PC-3 (cell line): ENCODE measurements at regions of chr14 and their contacts with region 1.

Region 1: DNA sequence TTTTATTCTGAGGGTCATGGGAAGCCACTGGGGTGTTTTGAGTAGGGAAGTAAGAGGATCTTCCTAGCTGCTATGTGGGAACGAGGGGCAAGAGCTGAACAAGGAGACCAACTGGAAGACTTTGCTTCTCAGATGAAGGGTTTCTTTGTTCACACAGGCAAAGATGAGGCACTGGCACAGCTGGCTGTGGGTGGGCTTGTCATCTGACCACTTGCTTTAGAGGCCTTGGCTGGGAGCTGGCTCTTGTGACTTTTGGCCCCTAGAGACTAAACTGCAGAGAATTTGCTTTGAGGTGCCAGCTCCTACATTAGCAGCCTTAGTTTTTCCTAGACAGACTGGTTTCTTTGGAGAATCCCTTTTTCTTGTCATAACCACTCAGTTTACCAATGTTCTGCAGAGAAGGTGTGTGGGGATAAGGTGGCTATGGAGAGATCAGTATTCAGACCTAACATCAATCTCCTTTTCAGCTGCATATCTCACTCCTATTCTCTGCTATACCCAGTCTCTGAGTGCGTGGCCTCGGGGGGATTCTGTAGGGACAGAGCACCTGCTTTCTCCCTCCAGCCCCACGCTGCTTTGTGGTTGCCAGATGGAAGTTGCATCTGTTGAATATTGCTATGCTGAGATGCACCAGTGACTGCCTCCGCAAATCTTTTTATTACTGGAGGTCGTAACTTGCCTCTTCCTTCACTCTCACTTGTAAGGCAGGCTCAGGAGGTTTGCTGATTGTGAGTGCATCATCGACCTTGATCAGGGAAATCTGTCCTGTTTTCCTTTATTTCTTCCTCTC is 12.7 kb downstream of the PPP2R5C start:
- DNase-seq: no peak
- ATAC-seq: no peak
- H3K4me3 ChIP-seq: no peak overlapping the region
- H3K27ac ChIP-seq: no peak overlapping the region
- H3K4me1 ChIP-seq: peaks cover 18% of the 10 kb centered on the region
- H3K27me3 ChIP-seq: no peaks in the 10 kb centered on the region
- CTCF ChIP-seq: no peak

Region 2: DNA sequence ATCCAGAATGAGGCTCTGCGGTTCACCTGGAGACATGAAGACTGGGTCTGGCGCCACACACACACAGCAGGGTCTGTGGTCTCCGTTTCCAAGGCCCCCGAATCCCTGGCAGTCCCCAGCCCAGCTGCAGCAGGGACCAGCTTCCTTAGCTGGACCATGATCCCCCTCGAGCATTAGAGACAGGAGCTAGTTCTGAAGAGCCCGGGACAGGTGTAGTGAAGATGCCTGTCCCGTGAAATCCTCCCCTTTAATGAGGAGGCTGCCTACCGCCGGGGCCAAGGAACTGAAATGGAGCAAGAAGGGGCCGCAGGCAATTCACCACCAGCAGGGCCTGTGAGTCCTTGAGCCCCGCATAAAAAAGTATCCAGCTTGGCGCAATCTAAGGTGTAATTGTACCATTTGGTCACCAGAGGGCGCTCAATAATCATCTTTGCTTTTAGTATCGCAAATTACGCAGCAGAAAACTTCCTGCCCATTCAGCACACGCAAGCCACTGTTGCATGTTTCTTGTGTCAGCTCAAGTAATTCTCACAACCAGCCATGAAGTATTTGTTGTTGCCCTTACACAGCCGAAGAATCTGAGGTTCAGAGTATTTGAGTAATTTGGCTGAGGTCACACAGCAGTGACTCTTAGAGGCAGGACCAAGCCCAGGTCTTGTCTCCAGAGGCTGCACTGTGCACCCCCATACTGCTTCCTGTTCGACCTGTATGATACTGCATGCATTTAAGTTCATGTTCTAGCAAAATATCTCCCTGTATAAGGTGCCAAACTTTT is 66.9 kb before region 1 on chr14:
- CTCF ChIA-PET with region 1: interaction called, 13 read pairs
- POLR2A ChIA-PET with region 1: no interaction called
- intact Hi-C with region 1: loop called (anchors 1 kb)
- DNase-seq: peak; percentile 89
- ATAC-seq: peak; percentile 55
- H3K4me3 ChIP-seq: 0 out of 2 replicates have a peak overlapping the region, but pooled peaks have one; percentile 25
- H3K27ac ChIP-seq: peak overlapping the region; percentile 21
- H3K4me1 ChIP-seq: peaks cover 22% of the 10 kb centered on the region
- H3K27me3 ChIP-seq: no peaks in the 10 kb centered on the region
- CTCF ChIP-seq: peak; percentile 88

Region 3: DNA sequence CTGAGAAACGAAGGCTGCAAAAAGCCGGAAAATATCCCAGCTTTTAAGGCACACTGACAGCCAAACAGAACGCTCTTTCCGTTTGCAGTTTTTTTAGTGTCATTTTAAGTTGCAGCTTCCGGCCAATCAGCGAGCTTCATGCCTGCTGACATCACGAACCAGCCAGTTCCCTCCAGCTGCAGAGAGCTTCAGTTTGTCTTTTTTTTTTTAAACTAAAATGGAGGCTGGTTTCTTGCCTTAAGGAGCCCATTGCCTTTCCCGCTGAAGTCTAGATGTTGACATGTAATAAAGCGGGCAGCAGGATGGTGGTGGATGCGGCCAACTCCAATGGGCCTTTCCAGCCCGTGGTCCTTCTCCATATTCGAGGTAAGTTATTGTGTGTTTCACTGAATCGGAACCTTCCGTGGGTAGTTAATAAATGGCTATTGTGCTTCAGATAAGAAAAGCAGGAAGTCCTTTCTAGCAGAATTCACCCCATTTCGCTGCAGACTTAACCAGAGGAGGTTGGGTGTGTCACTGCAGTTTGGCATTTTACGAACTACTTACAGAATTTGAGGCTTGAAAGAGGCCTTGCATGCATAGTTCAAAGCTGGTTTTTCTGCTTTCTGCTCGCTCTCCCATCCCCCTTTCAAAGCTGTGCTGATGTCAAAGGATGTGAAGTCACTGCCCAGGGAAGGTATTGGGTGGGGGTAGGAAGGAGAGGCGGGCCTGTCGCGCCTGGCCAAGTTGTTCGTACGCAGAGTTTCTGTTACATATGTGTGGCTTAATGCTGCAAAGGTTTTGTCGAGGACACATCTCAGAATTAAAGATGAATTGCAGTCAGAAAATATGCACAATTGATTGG is 35.7 kb after region 1 on chr14:
- CTCF ChIA-PET with region 1: interaction called, 8 read pairs
- POLR2A ChIA-PET with region 1: interaction called, 5 read pairs
- intact Hi-C with region 1: loop called (anchors 5 kb)
- DNase-seq: peak; percentile 93
- ATAC-seq: peak; percentile 92
- H3K4me3 ChIP-seq: peak overlapping the region; percentile 72
- H3K27ac ChIP-seq: peak overlapping the region; percentile 98
- H3K4me1 ChIP-seq: peaks cover 50% of the 10 kb centered on the region
- H3K27me3 ChIP-seq: no peaks in the 10 kb centered on the region
- CTCF ChIP-seq: no peak

Region 4: DNA sequence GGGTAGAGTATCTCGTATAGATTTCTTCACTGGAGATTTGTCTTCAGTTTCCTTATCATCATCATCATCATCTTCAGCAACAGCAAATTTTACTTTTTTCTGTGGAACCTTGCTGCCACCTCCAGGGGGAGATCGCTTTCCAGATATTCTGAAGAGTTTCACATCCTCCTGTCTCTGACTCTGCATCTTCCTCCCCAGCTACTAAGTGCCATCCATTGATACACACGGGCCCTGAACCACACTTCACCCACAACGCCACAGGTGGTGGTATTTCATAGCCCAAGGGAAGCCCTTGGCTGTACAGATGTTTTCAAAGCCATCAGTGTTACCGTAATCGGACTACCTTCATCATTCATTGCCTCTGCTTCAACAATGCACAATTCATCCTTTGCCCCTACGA is 69.5 kb after region 1 on chr14:
- CTCF ChIA-PET with region 1: interaction called, 3 read pairs
- POLR2A ChIA-PET with region 1: no interaction called
- intact Hi-C with region 1: loop called (anchors 5 kb)
- DNase-seq: peak; percentile 21
- ATAC-seq: 0 out of 2 replicates have a peak, but pooled peaks have one; percentile 20
- H3K4me3 ChIP-seq: no peak overlapping the region
- H3K27ac ChIP-seq: no peak overlapping the region
- H3K4me1 ChIP-seq: no peaks in the 10 kb centered on the region
- H3K27me3 ChIP-seq: no peaks in the 10 kb centered on the region
- CTCF ChIP-seq: peak; percentile 63

Region 5: GRCh38 chr14:101889898-101890297 is 115.7 kb after region 1 on chr14:
- CTCF ChIA-PET with region 1: interaction called, 6 read pairs
- POLR2A ChIA-PET with region 1: no interaction called
- intact Hi-C with region 1: loop called (anchors 1 kb)
- DNase-seq: peak; percentile 27
- ATAC-seq: peak; percentile 51
- H3K4me3 ChIP-seq: no peak overlapping the region
- H3K27ac ChIP-seq: no peak overlapping the region
- H3K4me1 ChIP-seq: no peaks in the 10 kb centered on the region
- H3K27me3 ChIP-seq: no peaks in the 10 kb centered on the region
- CTCF ChIP-seq: peak; percentile 47

Region 6: GRCh38 chr14:101953151-101953550 is 178.9 kb after region 1 on chr14:
- CTCF ChIA-PET with region 1: interaction called, 4 read pairs
- POLR2A ChIA-PET with region 1: no interaction called
- intact Hi-C with region 1: loop called (anchors 5 kb)
- DNase-seq: no peak
- ATAC-seq: no peak
- H3K4me3 ChIP-seq: no peak overlapping the region
- H3K27ac ChIP-seq: no peak overlapping the region
- H3K4me1 ChIP-seq: peaks cover 9% of the 10 kb centered on the region
- H3K27me3 ChIP-seq: no peaks in the 10 kb centered on the region
- CTCF ChIP-seq: no peak